Calu3 (cell line): ENCODE measurements at regions of chr3 and their contacts with region 1.

Region 1: DNA sequence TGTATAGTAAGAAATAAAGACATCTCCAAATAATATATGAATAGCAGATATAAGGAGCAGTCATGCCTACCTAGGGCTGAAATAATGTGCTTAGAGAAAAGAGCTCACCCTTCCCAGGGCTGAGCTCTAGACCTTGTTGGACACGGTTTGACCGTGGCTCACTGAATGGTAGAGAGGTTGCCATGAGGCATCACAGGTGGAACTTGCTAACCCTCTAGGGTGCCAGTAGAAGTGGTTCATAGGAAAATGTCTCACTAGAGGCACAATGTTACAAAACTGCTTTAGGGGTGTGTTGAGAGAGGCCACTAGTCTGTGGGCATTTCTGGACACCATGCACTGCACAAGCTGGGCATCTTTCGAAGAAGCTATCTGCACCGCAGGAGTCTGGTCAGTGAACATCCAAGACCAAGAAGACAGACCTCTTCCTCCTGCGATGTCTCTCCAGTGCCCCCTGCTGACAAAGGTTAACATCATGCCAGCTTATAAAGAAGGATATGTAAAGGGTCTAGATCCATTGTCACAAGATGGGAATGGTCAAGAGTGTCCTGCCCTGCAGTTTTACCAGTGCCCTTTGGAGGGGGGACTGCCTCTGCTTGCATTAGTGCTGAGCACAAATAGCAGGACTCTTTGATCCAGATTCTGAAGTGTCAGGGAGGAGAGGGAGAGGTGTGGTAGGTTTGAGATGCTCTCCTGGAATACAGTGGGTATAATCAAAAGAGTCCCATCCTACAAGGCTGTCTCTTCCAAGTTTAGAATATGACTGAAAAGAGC is 266.8 kb downstream of the ZNF385D start:
- DNase-seq: peak; percentile 80
- H3K4me3 Mint-ChIP-seq: no peak overlapping the region
- H3K27ac Mint-ChIP-seq: no peak overlapping the region
- H3K4me1 Mint-ChIP-seq: no peaks in the 10 kb centered on the region
- H3K27me3 Mint-ChIP-seq: no peaks in the 10 kb centered on the region
- CTCF ChIP-seq: peak; percentile 70

Region 2: DNA sequence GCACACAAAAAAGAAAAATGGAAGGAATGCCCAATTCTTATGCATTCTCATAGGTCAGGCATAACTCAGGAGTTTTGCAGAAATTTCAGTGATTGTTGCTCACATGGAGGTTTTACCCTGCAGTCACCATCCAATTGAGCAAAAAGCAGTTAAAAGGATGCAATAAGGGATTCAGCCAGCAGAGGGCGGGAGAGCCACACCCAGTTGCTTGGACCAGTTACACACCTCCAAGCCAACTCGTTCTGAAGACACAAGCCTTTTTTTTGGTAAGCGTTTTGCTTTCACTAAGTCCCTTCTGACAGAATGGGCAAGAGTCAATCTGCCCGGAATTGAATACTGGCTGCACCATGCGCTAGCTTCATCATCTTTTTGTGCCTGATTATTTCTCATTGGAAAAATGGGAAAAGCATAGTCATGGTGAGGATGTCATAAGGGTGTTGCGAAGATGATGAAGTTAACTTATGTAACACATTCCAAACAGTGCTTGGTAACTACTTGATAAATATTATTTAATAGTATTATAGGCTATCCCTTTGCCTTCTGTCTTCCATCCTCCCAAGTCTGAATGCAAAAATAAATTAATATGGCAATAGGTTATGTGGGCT is 1143.8 kb before region 1 on chr3:
- CTCF ChIA-PET with region 1: no interaction called
- intact Hi-C with region 1: loop called (anchors 2 kb)
- DNase-seq: peak; percentile 75
- H3K4me3 Mint-ChIP-seq: no peak overlapping the region
- H3K27ac Mint-ChIP-seq: no peak overlapping the region
- H3K4me1 Mint-ChIP-seq: no peaks in the 10 kb centered on the region
- H3K27me3 Mint-ChIP-seq: no peaks in the 10 kb centered on the region
- CTCF ChIP-seq: peak; percentile 63

Region 3: GRCh38 chr3:20930034-20930433 is 554.2 kb before region 1 on chr3:
- CTCF ChIA-PET with region 1: no interaction called
- intact Hi-C with region 1: loop called (anchors 1 kb)
- DNase-seq: peak; percentile 45
- H3K4me3 Mint-ChIP-seq: no peak overlapping the region
- H3K27ac Mint-ChIP-seq: no peak overlapping the region
- H3K4me1 Mint-ChIP-seq: peaks cover 19% of the 10 kb centered on the region
- H3K27me3 Mint-ChIP-seq: no peaks in the 10 kb centered on the region
- CTCF ChIP-seq: peak; percentile 27

Region 4: GRCh38 chr3:21256932-21257331 is 227.3 kb before region 1 on chr3:
- CTCF ChIA-PET with region 1: no interaction called
- intact Hi-C with region 1: loop called (anchors 5 kb)
- DNase-seq: peak; percentile 64
- H3K4me3 Mint-ChIP-seq: peak overlapping the region; percentile 18
- H3K27ac Mint-ChIP-seq: peak overlapping the region; percentile 56
- H3K4me1 Mint-ChIP-seq: peaks cover 43% of the 10 kb centered on the region
- H3K27me3 Mint-ChIP-seq: no peaks in the 10 kb centered on the region
- CTCF ChIP-seq: no peak

Region 5: GRCh38 chr3:21290557-21290956 is 193.7 kb before region 1 on chr3:
- CTCF ChIA-PET with region 1: interaction called, 3 read pairs
- intact Hi-C with region 1: loop called (anchors 10 kb)
- DNase-seq: peak; percentile 15
- H3K4me3 Mint-ChIP-seq: no peak overlapping the region
- H3K27ac Mint-ChIP-seq: no peak overlapping the region
- H3K4me1 Mint-ChIP-seq: peaks cover 9% of the 10 kb centered on the region
- H3K27me3 Mint-ChIP-seq: no peaks in the 10 kb centered on the region
- CTCF ChIP-seq: peak; percentile 29